Activated CD4-positive, alpha-beta T cell treated with anti-CD3 and anti-CD28 coated beads, Interleukin-2, amount 10 ng/mL, durations not matched to agents 24 days and 14 days (primary cell): ENCODE measurements at regions of chr20 and their contacts with region 1.

Region 1: DNA sequence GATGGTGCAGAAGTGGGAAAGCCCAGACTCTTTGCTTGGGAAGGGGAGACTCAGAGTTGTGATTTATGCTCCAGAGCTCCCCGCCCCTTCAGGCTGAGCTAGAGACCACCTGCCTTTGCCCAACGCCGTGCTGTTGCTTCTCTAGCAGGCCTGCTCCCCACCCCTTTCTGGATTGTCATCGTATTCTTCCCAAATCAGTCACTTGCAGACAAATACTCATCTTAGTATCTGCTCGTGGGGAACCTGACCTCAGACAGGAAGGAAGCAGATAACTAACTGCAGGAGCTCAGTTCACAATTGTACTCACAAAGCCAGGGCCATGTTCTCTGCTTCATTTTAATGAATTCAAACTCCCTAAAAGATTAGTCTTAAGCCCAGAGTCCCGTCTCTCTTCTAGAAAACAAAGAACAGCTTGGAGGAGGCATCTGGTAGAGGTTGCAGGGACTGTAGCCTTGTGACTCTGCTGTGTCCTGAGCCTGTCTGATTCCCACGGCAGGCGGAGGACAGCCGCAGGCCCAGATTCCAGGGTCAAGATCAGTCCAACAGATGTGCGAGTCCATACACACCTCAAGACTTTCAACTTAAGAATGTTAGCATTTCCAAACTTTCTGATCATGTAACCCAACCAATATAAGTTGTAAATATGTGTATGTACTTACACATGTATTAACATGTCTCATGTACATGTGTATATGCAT is 57.2 kb upstream of the GGTLC1 start:
- DNase-seq: peak; percentile 79
- H3K4me3 Mint-ChIP-seq: peak overlapping the region; percentile 51
- H3K27ac Mint-ChIP-seq: peak overlapping the region; percentile 69
- H3K4me1 Mint-ChIP-seq: peaks cover 40% of the 10 kb centered on the region
- H3K27me3 Mint-ChIP-seq: no peaks in the 10 kb centered on the region

Region 2: DNA sequence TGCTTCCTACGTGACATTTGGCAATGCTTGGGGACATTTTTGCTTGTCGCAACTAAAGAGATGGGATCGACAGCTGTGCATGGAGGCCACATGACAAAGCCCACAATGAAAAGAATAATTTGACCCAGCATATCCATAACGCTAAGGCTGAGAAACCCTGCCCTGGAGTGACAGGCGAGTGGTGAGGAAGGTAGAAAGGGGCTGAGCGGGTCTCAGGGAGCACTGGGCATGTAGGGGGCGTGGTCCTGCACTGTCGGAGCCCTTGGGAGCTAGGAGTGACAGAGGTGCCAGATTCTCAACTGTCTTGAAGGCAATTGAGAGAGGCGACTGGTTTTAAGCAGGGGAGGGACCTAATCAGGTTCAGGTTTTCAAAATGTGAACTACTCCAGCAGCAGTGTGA is 70.8 kb before region 1 on chr20:
- intact Hi-C with region 1: no loop called
- DNase-seq: no peak
- H3K4me3 Mint-ChIP-seq: no peak overlapping the region
- H3K27ac Mint-ChIP-seq: no peak overlapping the region
- H3K4me1 Mint-ChIP-seq: no peaks in the 10 kb centered on the region
- H3K27me3 Mint-ChIP-seq: peaks cover 4% of the 10 kb centered on the region

Region 3: GRCh38 chr20:24027229-24027628 is 18.5 kb before region 1 on chr20:
- intact Hi-C with region 1: loop called (anchors 1 kb)
- DNase-seq: peak; percentile 95
- H3K4me3 Mint-ChIP-seq: peak overlapping the region; percentile 66
- H3K27ac Mint-ChIP-seq: peak overlapping the region; percentile 94
- H3K4me1 Mint-ChIP-seq: peaks cover 42% of the 10 kb centered on the region
- H3K27me3 Mint-ChIP-seq: no peaks in the 10 kb centered on the region

Region 4: DNA sequence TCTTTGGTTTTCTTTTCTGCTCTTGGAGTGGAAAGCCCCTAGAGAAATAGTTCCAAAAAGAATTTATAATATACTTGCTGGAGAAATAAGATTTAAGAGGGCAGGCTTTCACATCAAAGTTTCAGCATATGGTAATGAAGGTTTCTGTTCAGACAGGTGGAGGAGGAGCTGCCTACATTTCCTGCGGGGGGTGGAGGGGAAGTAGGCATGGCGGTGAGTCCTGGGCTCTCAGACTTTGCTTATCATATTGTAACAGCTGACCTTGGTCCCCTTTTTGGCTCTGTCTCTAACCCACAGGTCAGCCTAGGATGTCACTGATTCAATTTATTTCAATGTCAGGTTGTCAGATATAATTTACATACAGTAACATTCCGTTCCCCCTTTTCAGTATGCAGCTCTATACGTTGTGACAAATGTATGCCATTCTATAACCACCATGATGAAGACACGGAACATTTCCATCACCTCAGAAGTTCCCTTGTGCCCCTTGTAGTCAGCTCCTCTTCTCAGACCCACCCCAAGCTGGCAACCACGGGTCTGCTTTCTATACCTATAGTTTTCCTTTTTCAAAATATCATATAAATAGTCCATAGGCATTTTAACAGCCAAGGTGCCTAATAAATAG is 20.4 kb after region 1 on chr20:
- intact Hi-C with region 1: loop called (anchors 1 kb)
- DNase-seq: peak; percentile 69
- H3K4me3 Mint-ChIP-seq: peak overlapping the region; percentile 61
- H3K27ac Mint-ChIP-seq: no peak overlapping the region
- H3K4me1 Mint-ChIP-seq: peaks cover 9% of the 10 kb centered on the region
- H3K27me3 Mint-ChIP-seq: peaks cover 2% of the 10 kb centered on the region

Region 5: GRCh38 chr20:24283186-24283585 is 237.4 kb after region 1 on chr20:
- intact Hi-C with region 1: no loop called
- DNase-seq: no peak
- H3K4me3 Mint-ChIP-seq: no peak overlapping the region
- H3K27ac Mint-ChIP-seq: no peak overlapping the region
- H3K4me1 Mint-ChIP-seq: no peaks in the 10 kb centered on the region
- H3K27me3 Mint-ChIP-seq: peaks cover 1% of the 10 kb centered on the region